SK-N-SH (cell line): ENCODE measurements at regions of chr7 and their contacts with region 1.

Region 1: GRCh38 chr7:128425850-128426249 is 16.1 kb upstream of the IMPDH1 start:
- DNase-seq: peak; percentile 83
- H3K4me3 ChIP-seq: no peak overlapping the region; a peak in 1 of 4 replicates
- H3K27ac ChIP-seq: no peak overlapping the region
- H3K4me1 ChIP-seq: peaks cover 0 to 3% of the 10 kb centered on the region in 2 experiments; a peak in 1 of 4 replicates
- H3K27me3 ChIP-seq: no peaks in the 10 kb centered on the region
- CTCF ChIP-seq: peak; percentile 100
- EP300 ChIP-seq: no peak
- RAD21 ChIP-seq: peak; percentile 95

Region 2: DNA sequence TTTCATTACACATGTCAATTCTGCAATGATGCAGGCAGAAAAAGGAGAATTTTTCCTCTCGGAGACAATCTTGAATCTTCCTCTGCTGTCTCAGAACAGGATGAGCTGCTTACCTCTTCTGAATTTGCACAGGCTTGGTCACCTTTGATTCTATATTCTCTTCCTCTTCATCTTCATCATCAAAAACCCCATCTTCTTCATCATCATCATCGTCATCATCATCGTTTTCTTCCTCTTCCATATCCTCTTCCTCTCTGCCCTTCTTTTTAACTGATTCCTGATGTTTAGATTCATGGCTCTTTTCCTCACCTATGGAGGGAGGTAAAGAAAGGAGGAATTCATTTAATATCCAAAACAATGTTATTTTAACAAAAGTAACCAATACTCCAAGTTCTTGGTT is 90.1 kb before region 1 on chr7:
- CTCF ChIA-PET with region 1: interaction called, 1,786 read pairs
- POLR2A ChIA-PET with region 1: no interaction called
- DNase-seq: no peak
- H3K4me3 ChIP-seq: no peak overlapping the region
- H3K27ac ChIP-seq: no peak overlapping the region
- H3K4me1 ChIP-seq: no peaks in the 10 kb centered on the region
- H3K27me3 ChIP-seq: no peaks in the 10 kb centered on the region
- CTCF ChIP-seq: no peak
- EP300 ChIP-seq: no peak
- RAD21 ChIP-seq: no peak

Region 3: DNA sequence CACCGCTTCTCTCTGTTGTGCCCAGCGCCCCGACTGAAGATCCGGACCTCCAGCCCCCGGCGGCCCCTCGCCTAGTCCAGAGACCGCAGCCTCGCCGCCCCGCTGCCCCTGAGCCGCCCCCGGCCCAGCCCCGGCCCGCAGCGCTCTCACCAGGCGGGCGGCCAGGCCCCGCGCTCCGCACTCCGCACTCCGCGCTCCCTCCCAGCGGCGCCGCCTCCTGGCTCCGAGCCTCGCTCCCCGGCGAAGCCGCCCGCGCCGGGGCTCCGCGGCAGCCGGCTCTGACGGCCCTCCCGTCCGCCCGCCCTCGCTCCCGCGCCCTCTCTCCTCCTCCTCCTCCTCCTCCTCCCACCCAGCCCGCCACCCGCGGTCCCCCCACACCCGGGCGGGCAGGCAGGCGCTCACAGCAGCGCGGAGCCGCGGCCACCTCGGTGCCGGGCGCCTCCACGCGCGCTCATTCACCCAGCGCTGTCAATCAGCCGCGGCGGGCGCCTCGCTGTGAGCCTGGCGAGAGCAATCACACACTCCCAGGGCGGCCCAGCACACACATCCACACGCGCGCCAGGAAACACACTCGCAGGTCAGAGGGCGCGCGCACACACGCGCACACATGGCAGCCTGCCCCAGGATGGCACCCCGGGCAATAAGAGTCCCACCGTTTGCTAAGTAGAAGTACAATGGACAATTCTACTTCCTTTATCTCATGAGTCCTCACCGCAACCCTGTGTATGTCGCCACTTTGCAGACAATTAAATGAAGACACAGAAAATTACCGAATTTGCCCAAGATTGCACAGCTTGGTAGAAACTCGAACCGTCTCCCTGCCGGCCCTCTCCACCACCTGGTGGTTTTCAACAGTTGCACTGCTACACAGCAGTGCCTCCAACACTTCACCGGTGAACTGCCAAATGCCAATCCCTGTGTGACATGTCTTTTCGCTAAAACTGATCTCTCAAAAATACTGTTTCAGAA is 64.2 kb before region 1 on chr7 and contains the start of gene PRRT4:
- CTCF ChIA-PET with region 1: interaction called, 35 read pairs
- POLR2A ChIA-PET with region 1: no interaction called
- DNase-seq: peak; percentile 73
- H3K4me3 ChIP-seq: peak within 1 kb of the TSS; percentile 54 to 63
- H3K27ac ChIP-seq: peak within 1 kb of the TSS in 1 of 2 experiments; percentile 100; a peak in 2 of 4 replicates
- H3K4me1 ChIP-seq: peaks cover 0 to 68% of the 10 kb centered on the region in 2 experiments; a peak in 2 of 4 replicates
- H3K27me3 ChIP-seq: peaks cover 46% of the 10 kb centered on the region
- CTCF ChIP-seq: no peak
- EP300 ChIP-seq: no peak
- RAD21 ChIP-seq: peak; percentile 58
- polyA plus RNA-seq, gene PRRT4: 1.5 and 3.4 TPM in 2 replicates

Region 4: DNA sequence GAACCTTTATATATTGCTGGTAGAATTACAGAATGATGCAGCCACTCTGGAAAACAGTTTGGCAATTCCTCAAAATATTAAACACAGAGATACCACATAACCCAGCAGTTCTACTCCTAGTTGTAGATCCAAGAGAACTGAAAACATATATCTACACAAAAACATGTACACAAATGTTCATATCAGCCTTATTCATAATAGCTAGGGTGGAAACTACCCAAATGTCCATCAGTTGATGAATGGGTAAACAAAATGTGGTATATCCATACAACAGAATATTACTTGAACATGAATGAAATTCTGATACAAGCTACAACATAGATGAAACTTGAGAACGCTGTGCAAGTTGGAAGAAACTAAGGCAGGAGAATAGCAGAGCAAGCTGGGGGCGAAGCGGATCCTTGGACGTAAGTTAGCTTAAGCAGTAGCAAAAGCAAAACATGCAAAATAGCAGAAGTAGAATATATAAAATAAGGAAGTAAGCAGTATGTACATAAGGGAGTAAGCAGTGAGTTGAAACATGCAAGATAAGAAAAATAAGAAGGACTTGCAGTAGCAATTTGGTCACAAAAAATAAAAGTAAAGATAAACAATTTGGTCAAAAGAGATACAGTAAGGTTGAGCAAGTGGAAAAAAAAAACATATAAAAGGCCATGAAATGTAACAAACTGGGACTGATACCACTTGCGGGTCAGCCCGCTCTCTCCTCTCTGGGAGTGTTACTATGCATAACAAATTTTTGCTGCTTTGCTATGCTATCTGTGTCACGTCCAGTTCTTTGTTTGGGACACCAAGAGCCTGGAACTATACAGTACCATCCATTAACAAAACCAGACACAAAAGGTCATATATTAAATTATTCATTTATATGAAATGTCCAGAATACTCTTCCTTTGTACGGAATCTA is 11.8 kb after region 1 on chr7:
- CTCF ChIA-PET with region 1: interaction called, 236 read pairs
- POLR2A ChIA-PET with region 1: no interaction called
- DNase-seq: no peak
- H3K4me3 ChIP-seq: no peak overlapping the region
- H3K27ac ChIP-seq: no peak overlapping the region
- H3K4me1 ChIP-seq: 0 out of 4 replicates have a peak, but pooled peaks cover 0 to 7% of the 10 kb centered on the region in 2 experiments
- H3K27me3 ChIP-seq: no peaks in the 10 kb centered on the region
- CTCF ChIP-seq: no peak
- EP300 ChIP-seq: no peak
- RAD21 ChIP-seq: no peak

Region 5: GRCh38 chr7:128450409-128450808 is 24.6 kb after region 1 on chr7:
- CTCF ChIA-PET with region 1: interaction called, 236 read pairs
- POLR2A ChIA-PET with region 1: interaction called, 7 read pairs
- DNase-seq: no peak
- H3K4me3 ChIP-seq: no peak overlapping the region
- H3K27ac ChIP-seq: no peak overlapping the region
- H3K4me1 ChIP-seq: peaks cover 6 to 28% of the 10 kb centered on the region in 2 experiments; a peak in 2 of 4 replicates
- H3K27me3 ChIP-seq: no peaks in the 10 kb centered on the region
- CTCF ChIP-seq: no peak
- EP300 ChIP-seq: no peak
- RAD21 ChIP-seq: no peak

Region 6: GRCh38 chr7:128462460-128462859 is 36.6 kb after region 1 on chr7:
- CTCF ChIA-PET with region 1: interaction called, 418 read pairs
- POLR2A ChIA-PET with region 1: interaction called, 6 read pairs
- DNase-seq: no peak
- H3K4me3 ChIP-seq: no peak overlapping the region
- H3K27ac ChIP-seq: no peak overlapping the region
- H3K4me1 ChIP-seq: peaks cover 12 to 13% of the 10 kb centered on the region in 2 experiments; a peak in 3 of 4 replicates
- H3K27me3 ChIP-seq: no peaks in the 10 kb centered on the region
- CTCF ChIP-seq: no peak
- EP300 ChIP-seq: no peak
- RAD21 ChIP-seq: no peak